Activated T-helper 1 cell treated with anti-CD3 and anti-CD28 coated beads, Interleukin-12 subunit alpha, Interleukin-12 subunit beta, Interleukin-2, Interleukin-4 antibody, amounts not matched to agents 30 ng/mL and 10 ng/mL and 1 ng/mL, durations not matched to agents 14 hours and 24 hours and 36 hours (primary cell): ENCODE measurements at regions of chr13 and their contacts with region 1.

Region 1: GRCh38 chr13:21435710-21436151 is 23.4 kb downstream of the ZDHHC20 start:
- DNase-seq: peak; percentile 48
- H3K4me3 Mint-ChIP-seq: peak overlapping the region; percentile 58
- H3K27ac Mint-ChIP-seq: peak overlapping the region; percentile 84
- H3K4me1 Mint-ChIP-seq: peaks cover 43% of the 10 kb centered on the region
- H3K27me3 Mint-ChIP-seq: no peaks in the 10 kb centered on the region

Region 2: GRCh38 chr13:21402586-21403228 is 33.0 kb before region 1 on chr13:
- intact Hi-C with region 1: loop called (anchors 5 kb)
- DNase-seq: no peak
- H3K4me3 Mint-ChIP-seq: no peak overlapping the region
- H3K27ac Mint-ChIP-seq: no peak overlapping the region
- H3K4me1 Mint-ChIP-seq: peaks cover 30% of the 10 kb centered on the region
- H3K27me3 Mint-ChIP-seq: no peaks in the 10 kb centered on the region